ENCODE measurements at regions of chr4 and their contacts with region 1.

Region 1: GRCh38 chr4:69322055-69322454 is 41.8 kb downstream of the UGT2B28 start:
- DNase-seq: no peak
- ATAC-seq: no peak
- H3K4me3 Mint-ChIP-seq: no peak overlapping the region
- H3K27ac Mint-ChIP-seq: no peak overlapping the region
- H3K4me1 Mint-ChIP-seq: no peaks in the 10 kb centered on the region
- H3K27me3 Mint-ChIP-seq: no peaks in the 10 kb centered on the region
- CTCF ChIP-seq: no peak

Region 2: GRCh38 chr4:70023218-70023617 is 701.2 kb after region 1 on chr4:
- CTCF ChIA-PET with region 1: no interaction called
- POLR2A ChIA-PET with region 1: no interaction called
- intact Hi-C with region 1: no loop called
- DNase-seq: no peak
- ATAC-seq: no peak
- H3K4me3 Mint-ChIP-seq: no peak overlapping the region
- H3K27ac Mint-ChIP-seq: no peak overlapping the region
- H3K4me1 Mint-ChIP-seq: no peaks in the 10 kb centered on the region
- H3K27me3 Mint-ChIP-seq: no peaks in the 10 kb centered on the region
- CTCF ChIP-seq: no peak

Region 3: DNA sequence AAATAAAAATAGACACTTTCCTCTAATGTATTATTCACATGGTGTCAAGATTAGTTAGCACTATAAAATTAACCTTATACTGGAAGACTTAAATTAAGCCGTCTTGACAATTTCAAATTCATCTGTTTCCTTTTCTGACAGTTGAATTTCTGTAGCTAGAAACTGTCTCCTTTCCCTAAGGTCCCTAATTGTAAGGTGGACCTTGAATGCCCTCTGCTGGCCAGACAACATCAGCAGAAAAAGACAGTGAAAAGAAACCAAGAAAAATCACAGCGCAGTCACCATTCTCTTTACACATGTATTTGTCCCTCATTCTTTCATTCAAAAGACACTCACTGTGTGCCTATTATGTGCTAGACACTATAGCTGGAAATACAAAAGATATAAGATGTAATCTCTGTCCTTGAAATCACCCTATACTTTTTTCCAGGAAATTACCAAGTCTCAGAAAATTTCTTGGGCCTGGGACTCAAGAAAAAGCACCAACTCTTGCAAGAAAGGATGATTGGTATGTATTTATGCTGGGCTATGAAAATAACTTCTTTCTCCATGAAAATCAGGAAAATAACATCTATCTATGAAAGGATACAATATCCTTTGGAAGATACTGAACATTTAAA is 1237.3 kb after region 1 on chr4:
- CTCF ChIA-PET with region 1: no interaction called
- POLR2A ChIA-PET with region 1: no interaction called
- intact Hi-C with region 1: loop called (anchors 5 kb)
- DNase-seq: no peak
- ATAC-seq: no peak
- H3K4me3 Mint-ChIP-seq: no peak overlapping the region
- H3K27ac Mint-ChIP-seq: no peak overlapping the region
- H3K4me1 Mint-ChIP-seq: peaks cover 9% of the 10 kb centered on the region
- H3K27me3 Mint-ChIP-seq: no peaks in the 10 kb centered on the region
- CTCF ChIP-seq: no peak